ENCODE measurements at regions of chr2 and their contacts with region 1.

Region 1: GRCh38 chr2:27271631-27272340 is 3.4 kb upstream of the DNAJC5G start:
- DNase-seq: no peak
- ATAC-seq: no peak
- H3K4me3 ChIP-seq: no peak overlapping the region
- H3K27ac ChIP-seq: no peak overlapping the region
- H3K4me1 ChIP-seq: peaks cover 0 to 6% (median 0%) of the 10 kb centered on the region in 4 donors
- H3K27me3 ChIP-seq: no peaks in the 10 kb centered on the region
- CTCF ChIP-seq: no peak
- POLR2A ChIP-seq: no peak

Region 2: DNA sequence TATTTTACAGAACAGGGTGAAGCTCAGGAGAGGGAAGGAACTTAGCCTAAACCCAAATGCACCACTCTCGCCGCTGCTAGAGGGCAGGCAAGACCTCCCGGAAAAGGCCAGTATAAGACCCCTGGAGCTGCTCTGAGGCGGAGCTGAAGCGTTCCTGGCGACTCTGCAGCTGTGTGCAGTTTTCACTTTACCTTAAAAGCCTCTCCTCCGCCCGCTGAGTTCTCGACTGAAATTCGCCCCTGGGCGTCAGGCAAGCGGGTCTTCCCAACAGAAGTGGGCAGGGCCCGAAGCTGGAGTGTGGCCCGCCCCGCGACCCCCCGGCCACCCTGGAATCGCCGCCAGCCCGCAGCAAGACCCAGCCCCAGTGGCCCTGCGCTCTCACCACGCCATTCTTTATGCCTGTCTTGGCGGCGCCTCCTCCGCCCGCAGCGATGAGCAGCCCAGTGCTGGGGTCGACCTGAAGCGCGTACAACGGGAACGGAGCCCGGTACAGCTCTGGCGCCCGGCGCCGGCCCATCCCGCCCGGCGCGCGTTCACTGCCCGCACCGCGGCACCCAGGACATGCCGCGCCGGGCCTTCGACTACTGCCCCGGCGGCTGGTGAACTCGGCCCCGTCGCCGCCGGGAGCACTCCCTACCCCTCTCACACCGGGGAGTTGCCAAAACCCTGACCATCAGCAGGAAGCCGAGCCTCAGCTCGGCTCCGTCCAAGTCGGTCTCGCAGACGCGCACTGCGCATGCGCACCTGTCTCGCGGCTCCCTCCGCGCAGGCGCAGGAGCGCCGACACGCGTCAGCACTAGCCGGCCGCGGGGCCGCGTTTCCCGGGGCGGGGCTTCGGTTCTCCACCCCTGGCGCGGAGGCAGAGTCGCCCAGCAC is 137.6 kb before region 1 on chr2 and contains the start of gene PREB:
- intact Hi-C with region 1: loop called in 1 of 2 experiments (anchors 10 kb)
- DNase-seq: peak; percentile 98
- ATAC-seq: peak; percentile 91 to 96 (median 92)
- H3K4me3 ChIP-seq: peak within 1 kb of the TSS; percentile 92 to 97 (median 96)
- H3K27ac ChIP-seq: peak within 1 kb of the TSS; percentile 72 to 84 (median 81)
- H3K4me1 ChIP-seq: peaks cover 0 to 13% (median 4%) of the 10 kb centered on the region in 4 donors
- H3K27me3 ChIP-seq: no peaks in the 10 kb centered on the region
- CTCF ChIP-seq: peak in 1 of 4 donors; percentile 7
- POLR2A ChIP-seq: peak; percentile 86
- total RNA-seq, gene PREB: 27.1 to 102 (median 59.2) TPM

Measured in right lobe of liver (tissue), 6 donors.